Psoas muscle (tissue), 8 donors: ENCODE measurements at regions of chr4 and their contacts with region 1.

Region 1: DNA sequence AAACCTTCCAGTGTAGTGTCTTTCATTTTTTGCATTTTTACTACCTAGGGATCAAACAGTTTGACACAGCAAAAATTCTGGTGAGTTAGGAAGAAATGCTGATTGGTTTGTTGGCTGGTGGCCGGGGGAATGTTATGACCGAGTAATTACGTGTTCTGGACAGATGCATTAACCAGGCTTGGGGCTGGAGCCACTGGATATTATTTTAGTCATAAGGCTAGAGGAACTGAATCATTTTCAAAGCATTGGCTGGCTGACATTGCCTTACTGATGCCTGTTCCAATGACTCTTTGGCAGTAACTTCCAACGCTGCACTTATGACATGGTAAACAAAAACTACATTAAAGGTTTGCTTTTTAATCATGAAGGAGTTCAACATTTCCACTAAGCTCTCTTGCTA is 84.6 kb downstream of the FBXO8 start:
- DNase-seq: no peak
- ATAC-seq: peak in 1 of 4 donors; percentile 26
- H3K4me3 ChIP-seq: no peak overlapping the region
- H3K27ac ChIP-seq: no peak overlapping the region
- H3K4me1 ChIP-seq: no peaks in the 10 kb centered on the region
- H3K27me3 ChIP-seq: peaks cover 0 to 8% (median 4%) of the 10 kb centered on the region in 3 donors
- CTCF ChIP-seq: no peak

Region 2: DNA sequence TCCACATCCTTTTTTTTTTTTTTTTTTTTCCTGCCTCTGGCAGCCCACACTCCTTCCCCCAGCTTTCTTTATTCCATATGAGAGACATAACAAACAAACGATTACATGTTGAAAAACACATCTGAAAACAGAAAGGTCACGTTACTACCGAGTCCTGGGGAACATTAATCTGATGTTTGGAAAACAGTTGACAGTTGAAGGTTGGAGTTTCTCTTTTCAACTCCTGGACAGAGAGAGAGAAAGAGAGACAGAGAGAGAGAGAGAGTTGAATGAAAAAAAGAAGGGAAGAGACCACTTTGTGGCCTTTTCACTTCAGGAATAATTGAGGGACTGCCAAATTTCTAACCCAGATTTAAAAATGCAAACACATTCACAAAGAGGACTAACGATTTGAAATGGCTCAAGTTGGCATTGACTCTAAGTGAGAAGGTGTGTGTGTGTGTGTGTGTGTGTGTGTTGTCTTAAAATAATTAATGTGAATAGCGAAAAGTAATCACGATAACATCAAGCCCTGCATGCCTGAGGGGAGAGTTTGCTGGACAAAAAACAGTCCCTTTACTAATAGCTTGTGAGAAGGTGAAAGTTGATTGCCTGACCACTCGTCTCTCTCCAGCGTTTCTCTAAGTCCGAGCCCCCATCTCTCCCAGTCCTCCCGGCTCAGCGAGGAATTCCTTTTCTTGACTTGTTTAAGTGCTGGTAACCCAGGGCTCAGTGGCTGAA is 17.3 kb after region 1 on chr4:
- intact Hi-C with region 1: loop called in 1 of 2 experiments (anchors 1 kb)
- DNase-seq: no peak
- ATAC-seq: no peak
- H3K4me3 ChIP-seq: no peak overlapping the region
- H3K27ac ChIP-seq: no peak overlapping the region
- H3K4me1 ChIP-seq: peaks cover 36% of the 10 kb centered on the region
- H3K27me3 ChIP-seq: peaks cover 5 to 81% (median 33%) of the 10 kb centered on the region in 3 donors
- CTCF ChIP-seq: no peak

Region 3: DNA sequence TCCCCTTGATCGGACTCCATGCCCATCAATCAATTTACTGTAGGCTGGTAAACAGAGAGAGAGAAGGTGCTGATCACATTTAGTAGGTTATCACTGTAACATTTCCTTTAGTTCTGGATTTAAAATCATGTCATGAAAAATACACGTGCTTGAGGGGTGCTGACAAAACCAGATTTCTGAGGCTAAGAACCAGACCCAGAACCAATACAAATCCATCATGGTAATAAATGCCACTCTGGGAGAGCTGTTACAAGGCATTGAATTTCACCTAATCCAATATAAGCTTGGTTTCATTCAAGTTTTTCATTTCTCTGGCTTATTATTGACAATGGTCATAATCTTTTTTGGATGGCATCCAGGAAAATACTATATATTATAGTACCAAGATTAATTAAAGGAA is 30.2 kb after region 1 on chr4:
- intact Hi-C with region 1: no loop called
- DNase-seq: no peak
- ATAC-seq: no peak
- H3K4me3 ChIP-seq: no peak overlapping the region
- H3K27ac ChIP-seq: no peak overlapping the region
- H3K4me1 ChIP-seq: no peaks in the 10 kb centered on the region
- H3K27me3 ChIP-seq: no peaks in the 10 kb centered on the region
- CTCF ChIP-seq: no peak